Heart right ventricle (tissue), 16 donors: ENCODE measurements at regions of chr1 and their contacts with region 1.

Region 1: DNA sequence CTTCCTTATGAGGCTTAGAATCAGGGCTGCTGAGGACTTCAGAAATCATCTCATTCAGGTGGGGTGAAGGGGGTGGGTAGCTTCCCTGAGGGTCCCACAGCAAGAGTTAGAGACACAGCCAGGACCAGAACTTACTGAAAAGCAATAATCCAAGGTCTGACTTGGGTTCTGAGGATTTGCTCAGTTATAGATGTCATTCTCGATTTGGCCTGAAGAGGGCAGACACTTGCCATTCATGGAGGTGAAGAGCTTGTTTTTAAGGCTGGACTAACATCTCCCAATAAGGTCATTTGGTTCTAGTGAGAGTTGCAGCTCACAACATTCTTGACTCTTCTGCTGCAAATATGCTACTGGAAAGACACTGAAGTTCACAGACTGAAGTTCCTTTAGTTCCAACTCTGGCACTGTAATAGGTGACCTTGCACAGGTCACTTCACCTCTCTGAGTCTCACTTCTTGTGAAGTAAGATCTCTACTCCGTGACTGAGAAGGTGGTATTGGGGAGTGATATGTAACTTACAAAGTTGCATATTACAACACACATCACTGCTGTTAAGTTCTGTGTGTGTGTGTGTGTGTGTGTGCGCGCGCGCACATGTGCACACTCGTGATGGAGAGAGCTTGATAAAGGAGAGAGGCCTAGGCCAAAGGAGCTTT is 69.8 kb upstream of the DIRAS3 start:
- DNase-seq: peak in 1 of 2 donors; percentile 63
- ATAC-seq: peak in 7 of 8 donors; percentile 39 to 81 (median 65)
- H3K4me3 ChIP-seq: no peak overlapping the region
- H3K27ac ChIP-seq: peak overlapping the region in 1 of 10 donors; percentile 22
- H3K4me1 ChIP-seq: peaks cover 0 to 8% (median 3%) of the 10 kb centered on the region in 9 donors
- H3K27me3 ChIP-seq: no peaks in the 10 kb centered on the region
- CTCF ChIP-seq: peak; percentile 69 to 91 (median 82)

Region 2: DNA sequence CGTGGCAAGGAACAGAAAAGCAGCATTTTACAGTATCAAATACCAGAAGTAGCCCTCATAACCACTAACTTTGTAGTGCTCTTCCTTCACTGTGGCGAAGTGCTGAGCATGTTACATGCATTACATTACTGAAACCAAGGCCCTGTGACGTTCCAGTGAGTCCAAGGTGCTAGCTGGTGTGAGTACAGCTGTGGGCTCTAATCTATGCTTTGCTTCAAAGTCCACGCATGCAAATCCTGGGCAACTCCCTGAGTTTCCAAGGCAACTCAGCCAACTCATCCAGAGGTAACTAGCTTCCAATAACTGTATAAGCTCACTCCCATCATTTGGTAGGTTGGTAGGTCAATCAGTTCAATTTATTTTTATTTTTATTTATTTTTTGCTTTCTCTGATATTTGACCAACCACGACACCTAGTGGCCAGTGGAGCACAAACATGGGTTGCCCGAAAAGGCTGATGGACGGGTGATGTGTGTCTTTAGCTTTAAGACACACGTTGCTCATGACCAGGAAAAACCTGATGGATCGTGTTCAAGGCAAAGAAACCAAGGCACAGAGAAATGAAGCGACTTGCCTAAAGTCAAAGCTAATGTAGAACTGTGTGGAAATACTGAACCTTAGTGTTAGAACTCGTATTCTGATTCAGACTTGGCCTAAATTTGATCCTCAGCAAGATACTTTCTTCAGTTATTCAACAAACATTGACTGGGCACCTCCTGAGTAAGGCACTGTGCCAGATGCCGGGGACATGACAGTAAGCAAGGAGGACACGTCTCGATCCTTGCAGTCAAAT is 360.0 kb before region 1 on chr1:
- intact Hi-C with region 1: loop called in 3 of 10 experiments (anchors 5 to 10 kb)
- DNase-seq: peak; percentile 26 to 66
- ATAC-seq: peak; percentile 56 to 82 (median 72)
- H3K4me3 ChIP-seq: no peak overlapping the region
- H3K27ac ChIP-seq: peak overlapping the region in 4 of 10 donors; percentile 29 to 42 (median 35)
- H3K4me1 ChIP-seq: peaks cover 0 to 31% (median 16%) of the 10 kb centered on the region in 9 donors
- H3K27me3 ChIP-seq: no peaks in the 10 kb centered on the region
- CTCF ChIP-seq: peak; percentile 64 to 96 (median 89)

Region 3: GRCh38 chr1:67853704-67854103 is 266.6 kb before region 1 on chr1:
- intact Hi-C with region 1: loop called in 1 of 10 experiments (anchors 10 kb)
- DNase-seq: peak; percentile 54 to 59
- ATAC-seq: peak; percentile 58 to 86 (median 74)
- H3K4me3 ChIP-seq: no peak overlapping the region
- H3K27ac ChIP-seq: no peak overlapping the region
- H3K4me1 ChIP-seq: peaks cover 0 to 12% (median 9%) of the 10 kb centered on the region in 9 donors
- H3K27me3 ChIP-seq: no peaks in the 10 kb centered on the region
- CTCF ChIP-seq: peak; percentile 57 to 83 (median 76)

Region 4: DNA sequence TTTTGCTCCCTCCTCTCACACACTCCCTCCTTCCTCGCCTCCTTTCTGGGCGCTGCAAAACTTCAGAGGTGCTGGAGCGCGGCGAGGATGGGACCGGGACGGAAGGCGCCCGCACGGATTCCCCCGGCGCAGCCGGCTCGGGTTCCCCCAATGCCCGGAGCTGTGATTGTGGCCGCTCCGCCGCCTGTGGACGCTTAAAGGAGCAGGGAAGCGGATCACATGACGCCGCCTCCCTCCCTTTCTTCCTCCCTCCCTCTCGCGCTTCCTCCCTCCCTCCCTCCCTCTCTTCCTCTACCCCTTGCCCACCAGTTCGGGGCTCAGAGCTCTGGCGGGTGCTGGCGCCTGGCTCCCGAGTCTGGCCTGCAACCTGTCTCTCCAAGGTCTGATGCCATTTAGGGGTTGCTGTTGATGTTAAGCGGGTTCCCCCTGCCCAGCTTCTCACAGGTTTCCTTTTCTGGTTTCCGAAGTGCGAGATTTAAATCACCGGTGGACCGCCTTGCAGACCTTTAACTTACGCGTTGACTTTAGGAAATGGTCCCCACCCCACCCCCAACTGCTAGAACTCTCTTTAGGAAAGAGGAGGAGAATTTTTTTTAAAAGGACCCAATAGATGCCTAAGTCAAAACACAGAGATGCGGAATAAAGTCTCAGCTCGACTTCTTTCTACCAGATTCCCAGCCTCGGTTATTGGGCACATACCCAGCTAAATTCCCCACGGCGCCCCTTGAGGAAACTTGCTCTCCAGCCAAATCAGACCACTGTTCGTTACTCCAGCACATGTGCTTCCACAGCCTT is 112.3 kb after region 1 on chr1 and contains the start of gene WLS:
- intact Hi-C with region 1: loop called in 6 of 10 experiments (anchors 2 to 10 kb)
- DNase-seq: peak; percentile 79 to 83
- ATAC-seq: peak; percentile 87 to 91 (median 90)
- H3K4me3 ChIP-seq: peak within 1 kb of the TSS; percentile 70 to 91 (median 82)
- H3K27ac ChIP-seq: peak within 1 kb of the TSS; percentile 41 to 89 (median 87)
- H3K4me1 ChIP-seq: peaks cover 0 to 39% (median 27%) of the 10 kb centered on the region in 9 donors
- H3K27me3 ChIP-seq: peaks cover 0 to 12% (median 0%) of the 10 kb centered on the region in 7 donors
- CTCF ChIP-seq: peak in 5 of 9 donors; percentile 7 to 36 (median 25)
- total RNA-seq, gene WLS: 82.3 to 123 (median 109) TPM

Region 5: GRCh38 chr1:68321084-68321685 is 200.9 kb after region 1 on chr1:
- intact Hi-C with region 1: loop called (anchors 1 to 10 kb)
- DNase-seq: peak; percentile 53 to 64
- ATAC-seq: peak; percentile 87 to 94 (median 91)
- H3K4me3 ChIP-seq: no peak overlapping the region
- H3K27ac ChIP-seq: no peak overlapping the region
- H3K4me1 ChIP-seq: peaks cover 0 to 14% (median 0%) of the 10 kb centered on the region in 9 donors
- H3K27me3 ChIP-seq: no peaks in the 10 kb centered on the region
- CTCF ChIP-seq: peak; percentile 26 to 84 (median 77)

Region 6: GRCh38 chr1:68346188-68346808 is 226.0 kb after region 1 on chr1:
- intact Hi-C with region 1: loop called (anchors 1 to 10 kb)
- DNase-seq: no peak
- ATAC-seq: no peak
- H3K4me3 ChIP-seq: no peak overlapping the region
- H3K27ac ChIP-seq: no peak overlapping the region
- H3K4me1 ChIP-seq: peaks cover 0 to 7% (median 0%) of the 10 kb centered on the region in 9 donors
- H3K27me3 ChIP-seq: no peaks in the 10 kb centered on the region
- CTCF ChIP-seq: peak in 8 of 9 donors; percentile 30 to 68 (median 55)

Region 7: DNA sequence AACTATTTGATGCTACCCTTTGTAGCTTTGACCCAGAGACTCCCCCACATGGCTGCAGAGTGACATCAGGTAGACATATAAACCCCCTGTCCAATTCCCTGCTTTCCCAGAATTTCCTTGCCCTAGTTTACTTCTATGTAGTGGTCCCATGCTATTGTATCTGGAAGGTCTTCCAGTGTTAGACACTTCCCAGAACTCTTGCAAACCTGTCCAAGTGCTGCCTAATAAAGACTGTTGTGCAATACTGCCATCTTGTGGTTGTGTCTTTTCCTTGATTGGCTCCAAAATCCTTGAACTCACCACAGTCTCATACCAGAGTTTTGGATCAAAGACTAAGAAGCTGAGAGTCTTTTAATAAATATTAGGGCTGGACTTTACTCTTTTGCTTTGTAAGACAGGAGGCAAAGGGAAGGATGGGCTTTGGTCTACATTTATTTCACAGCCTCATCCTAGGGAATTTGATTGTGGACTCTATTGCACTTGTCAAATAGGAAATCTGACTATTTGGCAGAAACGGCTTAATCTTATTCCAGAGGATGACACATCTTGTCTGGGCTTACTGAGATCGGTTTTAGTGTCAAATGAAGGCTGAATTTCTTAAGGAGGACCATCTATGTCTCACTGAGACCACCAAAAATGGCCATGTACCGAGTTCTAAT is 1617.4 kb after region 1 on chr1:
- intact Hi-C with region 1: loop called in 1 of 10 experiments (anchors 10 kb)
- DNase-seq: peak in 1 of 2 donors; percentile 15
- ATAC-seq: peak in 7 of 8 donors; percentile 52 to 80 (median 64)
- H3K4me3 ChIP-seq: no peak overlapping the region
- H3K27ac ChIP-seq: no peak overlapping the region
- H3K4me1 ChIP-seq: no peaks in the 10 kb centered on the region
- H3K27me3 ChIP-seq: no peaks in the 10 kb centered on the region
- CTCF ChIP-seq: peak; percentile 36 to 71 (median 62)